ENCODE measurements at regions of chr11 and their contacts with region 1.

Region 1: DNA sequence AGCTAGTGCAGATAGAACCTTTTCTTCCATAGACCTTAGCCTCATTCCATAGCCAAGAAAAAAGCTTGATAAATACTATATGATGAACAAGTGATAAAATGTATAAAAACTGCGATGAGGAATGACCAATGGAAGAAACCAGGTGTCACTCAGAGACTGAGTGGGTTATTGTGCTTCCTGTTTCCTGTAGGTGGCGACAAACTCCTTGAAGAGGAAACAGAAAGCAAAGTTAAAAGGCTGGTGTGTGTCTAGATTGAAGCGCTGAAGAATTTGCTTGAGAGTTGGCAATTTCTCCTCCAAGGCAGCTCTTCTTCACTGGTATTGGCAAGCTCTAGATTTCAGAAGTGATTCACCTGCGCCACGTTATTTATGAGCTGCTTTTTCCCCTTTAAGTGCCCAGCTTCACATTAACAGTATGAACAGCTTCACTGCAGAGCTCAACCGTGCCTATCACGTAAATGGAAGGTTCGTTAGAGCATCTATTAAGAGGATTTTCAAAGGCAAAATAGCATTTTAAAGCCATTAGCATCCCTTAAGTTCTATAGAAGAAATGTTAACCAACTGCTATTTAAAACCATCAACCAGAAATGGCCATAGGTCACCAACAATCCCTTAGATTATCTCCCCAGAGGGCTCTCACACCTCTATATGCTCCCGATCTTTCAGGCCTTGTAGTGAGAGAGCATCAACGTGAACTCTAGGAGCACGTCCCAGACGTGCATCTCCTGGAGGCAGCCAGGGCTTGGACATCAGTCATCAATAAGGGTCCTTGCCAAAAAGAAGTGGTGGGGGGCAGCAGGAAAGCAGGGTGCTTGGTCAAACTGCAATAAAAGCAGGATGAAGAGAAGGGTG is 179.4 kb downstream of the CADM1 start:
- DNase-seq: peak in 2 of 5 donors; percentile 7 to 30
- H3K4me3 ChIP-seq: no peak overlapping the region
- H3K27ac ChIP-seq: no peak overlapping the region
- H3K4me1 ChIP-seq: no peaks in the 10 kb centered on the region
- H3K27me3 ChIP-seq: no peaks in the 10 kb centered on the region
- CTCF ChIP-seq: peak; percentile 37 to 60 (median 53)
- EP300 ChIP-seq: no peak
- POLR2A ChIP-seq: no peak

Region 2: GRCh38 chr11:116276051-116277044 is 951.5 kb after region 1 on chr11:
- intact Hi-C with region 1: loop called in 3 of 4 experiments (anchors 5 to 10 kb)
- DNase-seq: peak; percentile 32 to 77 (median 59)
- H3K4me3 ChIP-seq: no peak overlapping the region
- H3K27ac ChIP-seq: no peak overlapping the region
- H3K4me1 ChIP-seq: no peaks in the 10 kb centered on the region
- H3K27me3 ChIP-seq: no peaks in the 10 kb centered on the region
- CTCF ChIP-seq: peak; percentile 44 to 84 (median 57)
- EP300 ChIP-seq: no peak
- POLR2A ChIP-seq: no peak

Region 3: DNA sequence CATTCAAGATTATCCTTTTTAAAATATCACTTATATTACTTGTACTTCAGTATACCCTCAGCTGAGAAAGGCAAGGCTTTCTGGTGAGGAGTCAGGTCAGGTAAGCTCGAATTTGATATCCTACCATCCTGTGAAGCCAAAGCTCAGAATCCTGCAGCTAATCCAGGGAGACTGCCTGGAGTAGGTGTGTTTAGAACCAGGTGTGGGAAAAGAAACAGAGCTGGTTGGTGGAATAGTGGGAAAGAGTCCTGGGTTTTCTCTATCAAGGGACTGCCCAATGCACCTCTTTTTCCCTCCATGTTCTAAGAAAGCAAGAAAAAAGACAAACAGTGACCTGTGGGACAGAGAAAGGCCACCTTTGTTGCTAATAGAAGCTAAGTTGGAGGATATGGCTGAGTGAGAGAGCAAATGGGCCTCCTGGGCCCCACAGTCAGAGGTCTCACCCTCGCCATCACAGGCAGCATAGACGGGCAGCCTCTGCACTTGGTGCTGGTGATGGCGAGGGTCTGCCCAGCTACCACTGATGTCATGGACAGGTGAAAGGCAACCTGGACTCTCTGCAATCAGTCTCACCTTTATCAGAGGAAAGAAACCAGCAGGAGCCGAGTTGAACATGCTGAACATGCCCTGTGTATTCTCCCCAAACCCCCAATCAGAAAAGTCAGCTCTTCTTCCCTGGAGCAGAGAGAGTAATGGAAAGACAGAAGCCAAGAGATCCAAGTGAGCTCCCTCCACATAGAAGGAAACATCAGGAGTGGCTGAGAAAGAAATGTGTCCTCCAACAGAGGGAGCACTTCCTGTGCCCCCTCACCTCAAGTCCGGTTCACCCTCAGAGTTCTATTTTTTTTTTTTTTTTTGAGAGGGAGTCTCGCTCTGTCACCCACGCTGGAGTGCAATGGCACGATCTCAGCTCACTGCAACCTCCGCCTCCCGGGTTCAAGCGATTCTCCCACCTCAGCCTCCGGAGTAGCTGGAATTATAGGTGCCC is 956.7 kb after region 1 on chr11:
- intact Hi-C with region 1: loop called in 3 of 4 experiments (anchors 5 to 10 kb)
- DNase-seq: no peak
- H3K4me3 ChIP-seq: no peak overlapping the region
- H3K27ac ChIP-seq: no peak overlapping the region
- H3K4me1 ChIP-seq: no peaks in the 10 kb centered on the region
- H3K27me3 ChIP-seq: no peaks in the 10 kb centered on the region
- CTCF ChIP-seq: no peak
- EP300 ChIP-seq: no peak
- POLR2A ChIP-seq: no peak